ENCODE measurements at regions of chr5 and their contacts with region 1.

Region 1: GRCh38 chr5:33969572-33970452 is 14.7 kb downstream of the SLC45A2 start:
- ATAC-seq: peak in 5 of 8 experiments; percentile 43 to 94 (median 93)
- H3K4me3 ChIP-seq: no peak overlapping the region
- H3K27ac ChIP-seq: no peak overlapping the region
- H3K4me1 ChIP-seq: peaks cover 0 to 4% of the 10 kb centered on the region in 2 donors

Region 2: GRCh38 chr5:33440482-33441240 is 529.2 kb before region 1 on chr5 and contains the start of gene TARS1:
- in situ Hi-C with region 1: loop called in 1 of 9 experiments (anchors 25 kb)
- ATAC-seq: peak; percentile 89 to 98 (median 97)
- H3K4me3 ChIP-seq: peak within 1 kb of the TSS; percentile 62 to 80 (median 79)
- H3K27ac ChIP-seq: peak within 1 kb of the TSS; percentile 90 to 95
- H3K4me1 ChIP-seq: peaks cover 11 to 13% of the 10 kb centered on the region in 2 donors
- total RNA-seq, gene TARS1: 143 to 300 (median 179) TPM

Region 3: GRCh38 chr5:33565324-33565723 is 404.5 kb before region 1 on chr5:
- in situ Hi-C with region 1: no loop called
- ATAC-seq: no peak
- H3K4me3 ChIP-seq: no peak overlapping the region
- H3K27ac ChIP-seq: no peak overlapping the region
- H3K4me1 ChIP-seq: peaks cover 0 to 3% of the 10 kb centered on the region in 2 donors

Measured in motor neuron (in vitro differentiated cells).